Naive thymus-derived CD4-positive, alpha-beta T cell (primary cell): ENCODE measurements at regions of chr4 and their contacts with region 1.

Region 1: GRCh38 chr4:140078366-140078765 is 75.6 kb downstream of the MAML3 start:
- DNase-seq: no peak
- ATAC-seq: no peak
- H3K4me3 ChIP-seq: no peak overlapping the region
- H3K4me3 Mint-ChIP-seq: no peak overlapping the region
- H3K27ac ChIP-seq: no peak overlapping the region
- H3K27ac Mint-ChIP-seq: peak overlapping the region in 2 of 9 donors; percentile 2 to 5
- H3K4me1 ChIP-seq: peaks cover 0 to 6% of the 10 kb centered on the region in 2 donors
- H3K4me1 Mint-ChIP-seq: peaks cover 7 to 44% (median 25%) of the 10 kb centered on the region in 7 donors
- H3K27me3 ChIP-seq: no peaks in the 10 kb centered on the region
- H3K27me3 Mint-ChIP-seq: peaks cover 0 to 40% (median 0%) of the 10 kb centered on the region in 5 donors

Region 2: DNA sequence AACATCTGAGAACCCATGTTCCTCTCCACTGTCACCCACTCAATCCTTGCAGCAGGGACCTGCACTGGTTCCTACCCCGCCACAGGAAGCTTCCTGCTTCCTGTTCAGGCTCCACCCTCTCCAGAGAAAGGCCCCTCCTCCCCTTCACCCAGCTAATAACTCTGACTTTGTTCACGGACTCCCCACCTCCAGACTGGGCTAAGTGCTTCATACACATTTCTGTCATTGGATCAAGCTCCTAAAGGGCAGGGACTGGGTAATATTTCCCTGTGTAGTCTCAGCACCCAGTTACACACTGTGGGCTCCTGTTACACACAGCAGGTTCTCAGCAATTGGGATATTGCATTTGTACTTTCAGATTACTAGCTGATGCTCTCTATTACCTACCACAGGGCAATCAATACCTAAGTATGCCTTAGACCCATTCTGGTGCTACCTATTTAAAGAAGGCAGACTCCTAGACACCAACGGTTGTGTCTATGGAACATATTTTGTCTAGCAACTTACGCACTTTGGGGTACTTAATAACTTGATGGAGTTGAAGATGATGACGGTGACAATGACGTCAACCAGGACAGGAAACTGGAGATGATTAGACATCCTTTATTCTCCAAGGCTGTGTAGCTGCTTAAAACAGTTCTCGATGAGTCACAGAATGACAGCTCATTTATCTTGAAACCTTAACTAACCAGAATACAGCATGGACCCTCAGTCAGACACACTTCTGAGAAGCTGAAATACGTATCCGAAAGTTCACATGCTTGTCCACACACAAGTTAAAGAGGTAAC is 17.5 kb after region 1 on chr4:
- CTCF ChIA-PET with region 1: interaction called, 4 read pairs
- POLR2A ChIA-PET with region 1: interaction called, 5 read pairs
- intact Hi-C with region 1: loop called in 1 of 2 experiments (anchors 2 kb)
- DNase-seq: peak in 8 of 9 donors; percentile 46 to 92 (median 71)
- ATAC-seq: peak; percentile 73
- H3K4me3 ChIP-seq: peak overlapping the region; percentile 39
- H3K4me3 Mint-ChIP-seq: peak overlapping the region; percentile 68 to 97 (median 88)
- H3K27ac ChIP-seq: peak overlapping the region; percentile 73
- H3K27ac Mint-ChIP-seq: peak overlapping the region; percentile 90 to 99 (median 95)
- H3K4me1 ChIP-seq: peaks cover 5 to 53% of the 10 kb centered on the region in 2 donors
- H3K4me1 Mint-ChIP-seq: peaks cover 51 to 83% (median 75%) of the 10 kb centered on the region in 7 donors
- H3K27me3 ChIP-seq: no peaks in the 10 kb centered on the region
- H3K27me3 Mint-ChIP-seq: peaks cover 0 to 2% (median 0%) of the 10 kb centered on the region in 5 donors